Mammary epithelial cell (primary cell): ENCODE measurements at regions of chr7 and their contacts with region 1.

Region 1: GRCh38 chr7:5083311-5083711 is 37.7 kb downstream of the RBAK start:
- DNase-seq: no peak
- H3K4me3 ChIP-seq: no peak overlapping the region
- H3K27ac ChIP-seq: no peak overlapping the region
- H3K4me1 ChIP-seq: no peaks in the 10 kb centered on the region
- H3K27me3 ChIP-seq: no peaks in the 10 kb centered on the region
- CTCF ChIP-seq: no peak

Region 2: DNA sequence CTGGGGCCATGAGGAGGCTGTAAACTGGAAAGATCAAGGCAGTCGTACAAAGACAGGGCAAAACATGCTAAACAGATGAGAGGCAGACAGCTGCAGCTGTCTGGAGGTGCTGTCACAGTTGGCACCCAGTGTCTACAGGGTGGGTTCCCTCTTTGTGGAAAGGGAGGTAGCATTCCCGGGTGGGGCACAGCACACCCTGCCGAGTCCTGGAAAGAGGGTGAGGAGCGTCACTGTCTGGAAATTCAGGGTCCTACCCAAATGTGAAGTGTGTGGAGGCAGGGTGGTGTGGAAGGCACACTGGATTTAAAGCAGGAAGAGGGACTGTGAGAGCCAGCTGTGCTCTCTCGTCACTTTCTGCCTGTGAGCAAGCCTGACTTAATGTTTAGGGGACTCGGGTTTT is 1426.1 kb before region 1 on chr7:
- CTCF ChIA-PET with region 1: interaction called, 22 read pairs
- dilution Hi-C with region 1: no loop called
- in situ Hi-C with region 1: no loop called
- intact Hi-C with region 1: no loop called
- DNase-seq: no peak
- H3K4me3 ChIP-seq: no peak overlapping the region
- H3K27ac ChIP-seq: no peak overlapping the region
- H3K4me1 ChIP-seq: no peaks in the 10 kb centered on the region
- H3K27me3 ChIP-seq: no peaks in the 10 kb centered on the region
- CTCF ChIP-seq: no peak

Region 3: DNA sequence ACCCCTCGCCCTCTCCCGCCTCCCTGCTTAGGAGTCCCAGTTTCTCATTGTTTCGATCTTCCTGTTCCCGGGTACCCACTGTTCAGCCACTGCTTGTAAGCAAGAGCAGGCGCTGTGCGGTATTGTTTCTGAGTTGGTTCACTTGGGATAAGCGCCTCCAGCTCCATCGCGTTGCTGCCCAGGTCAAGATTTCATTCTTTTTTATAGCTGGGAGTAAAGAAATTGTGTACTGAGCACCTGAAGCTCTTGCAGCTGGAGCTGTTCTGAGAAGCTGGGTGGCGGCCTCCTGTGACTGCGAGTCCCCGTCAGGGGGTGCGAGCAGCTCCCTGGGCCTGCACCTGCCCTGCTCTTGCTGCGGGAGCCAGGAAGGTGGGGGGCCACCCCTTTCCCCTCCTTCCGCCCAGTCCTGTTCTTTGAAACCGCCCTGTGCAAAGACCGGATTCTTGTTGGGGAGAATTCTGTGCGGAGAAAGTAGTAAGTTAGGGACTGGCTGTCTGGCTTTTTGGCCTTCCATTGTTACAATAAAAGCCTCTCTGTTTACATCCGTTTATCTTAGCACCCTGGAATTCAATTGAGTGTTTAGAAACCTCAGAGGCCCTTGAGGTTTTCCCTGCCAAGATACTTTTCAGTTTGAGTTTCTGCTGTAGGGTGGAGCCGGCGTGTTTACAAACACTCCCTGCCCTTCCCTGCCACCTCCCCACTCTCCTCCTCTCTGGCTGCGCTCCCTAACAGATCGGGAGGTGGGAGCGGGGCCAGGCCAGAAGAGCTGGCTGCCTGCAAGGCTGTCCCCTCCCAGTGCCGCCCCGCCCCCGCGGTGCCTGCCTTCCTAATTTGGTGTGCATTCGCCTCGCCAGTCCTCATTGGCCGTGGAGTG is 338.7 kb before region 1 on chr7:
- CTCF ChIA-PET with region 1: no interaction called
- dilution Hi-C with region 1: no loop called
- in situ Hi-C with region 1: no loop called
- intact Hi-C with region 1: no loop called
- DNase-seq: peak; percentile 99
- H3K4me3 ChIP-seq: peak overlapping the region in 2 of 3 experiments; percentile 16
- H3K27ac ChIP-seq: peak overlapping the region; percentile 91
- H3K4me1 ChIP-seq: peaks cover 25% of the 10 kb centered on the region
- H3K27me3 ChIP-seq: no peaks in the 10 kb centered on the region
- CTCF ChIP-seq: peak in 1 of 2 donors; percentile 1

Region 4: GRCh38 chr7:5607951-5608656 is 524.8 kb after region 1 on chr7:
- CTCF ChIA-PET with region 1: no interaction called
- dilution Hi-C with region 1: no loop called
- in situ Hi-C with region 1: no loop called
- intact Hi-C with region 1: no loop called
- DNase-seq: peak; percentile 85
- H3K4me3 ChIP-seq: no peak overlapping the region
- H3K27ac ChIP-seq: peak overlapping the region; percentile 43
- H3K4me1 ChIP-seq: peaks cover 22% of the 10 kb centered on the region
- H3K27me3 ChIP-seq: no peaks in the 10 kb centered on the region
- CTCF ChIP-seq: no peak